Activated CD4-positive, alpha-beta T cell treated with anti-CD3 and anti-CD28 coated beads, Interleukin-2, amount 10 ng/mL, durations not matched to agents 7 days and 5 days (primary cell): ENCODE measurements at regions of chr15 and their contacts with region 1.

Region 1: DNA sequence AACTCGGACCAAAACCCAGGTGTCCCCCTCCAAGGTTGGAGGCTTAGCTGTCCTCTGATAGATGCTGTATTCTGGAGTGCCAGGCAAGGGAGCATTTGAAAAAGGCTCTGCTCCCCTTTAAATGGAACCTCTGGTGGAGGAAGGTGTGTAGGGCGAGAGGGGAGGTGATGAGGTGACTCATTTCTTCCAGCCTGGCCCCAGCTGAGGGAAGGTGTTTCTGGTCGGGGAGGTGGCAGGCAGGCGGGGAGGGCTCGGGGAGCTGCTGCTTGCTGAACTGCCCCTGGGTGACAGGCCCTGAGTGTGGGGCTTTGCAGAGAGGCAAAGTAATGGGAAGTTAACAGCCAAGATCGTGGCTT is 18.8 kb downstream of the PSTPIP1 start:
- DNase-seq: peak; percentile 86
- H3K4me3 Mint-ChIP-seq: peak overlapping the region; percentile 61
- H3K27ac Mint-ChIP-seq: peak overlapping the region; percentile 93
- H3K4me1 Mint-ChIP-seq: peaks cover 90% of the 10 kb centered on the region
- H3K27me3 Mint-ChIP-seq: no peaks in the 10 kb centered on the region

Region 2: GRCh38 chr15:77024271-77025082 is 10.7 kb after region 1 on chr15:
- CTCF ChIA-PET with region 1: interaction called, 10 read pairs
- POLR2A ChIA-PET with region 1: no interaction called
- DNase-seq: peak; percentile 63
- H3K4me3 Mint-ChIP-seq: no peak overlapping the region
- H3K27ac Mint-ChIP-seq: peak overlapping the region; percentile 80
- H3K4me1 Mint-ChIP-seq: peaks cover 53% of the 10 kb centered on the region
- H3K27me3 Mint-ChIP-seq: no peaks in the 10 kb centered on the region

Region 3: GRCh38 chr15:77126529-77127326 is 113.0 kb after region 1 on chr15:
- CTCF ChIA-PET with region 1: no interaction called
- POLR2A ChIA-PET with region 1: no interaction called
- DNase-seq: no peak
- H3K4me3 Mint-ChIP-seq: no peak overlapping the region
- H3K27ac Mint-ChIP-seq: no peak overlapping the region
- H3K4me1 Mint-ChIP-seq: peaks cover 9% of the 10 kb centered on the region
- H3K27me3 Mint-ChIP-seq: no peaks in the 10 kb centered on the region